HepG2 (cell line): ENCODE measurements at regions of chr1 and their contacts with region 1.

Region 1: DNA sequence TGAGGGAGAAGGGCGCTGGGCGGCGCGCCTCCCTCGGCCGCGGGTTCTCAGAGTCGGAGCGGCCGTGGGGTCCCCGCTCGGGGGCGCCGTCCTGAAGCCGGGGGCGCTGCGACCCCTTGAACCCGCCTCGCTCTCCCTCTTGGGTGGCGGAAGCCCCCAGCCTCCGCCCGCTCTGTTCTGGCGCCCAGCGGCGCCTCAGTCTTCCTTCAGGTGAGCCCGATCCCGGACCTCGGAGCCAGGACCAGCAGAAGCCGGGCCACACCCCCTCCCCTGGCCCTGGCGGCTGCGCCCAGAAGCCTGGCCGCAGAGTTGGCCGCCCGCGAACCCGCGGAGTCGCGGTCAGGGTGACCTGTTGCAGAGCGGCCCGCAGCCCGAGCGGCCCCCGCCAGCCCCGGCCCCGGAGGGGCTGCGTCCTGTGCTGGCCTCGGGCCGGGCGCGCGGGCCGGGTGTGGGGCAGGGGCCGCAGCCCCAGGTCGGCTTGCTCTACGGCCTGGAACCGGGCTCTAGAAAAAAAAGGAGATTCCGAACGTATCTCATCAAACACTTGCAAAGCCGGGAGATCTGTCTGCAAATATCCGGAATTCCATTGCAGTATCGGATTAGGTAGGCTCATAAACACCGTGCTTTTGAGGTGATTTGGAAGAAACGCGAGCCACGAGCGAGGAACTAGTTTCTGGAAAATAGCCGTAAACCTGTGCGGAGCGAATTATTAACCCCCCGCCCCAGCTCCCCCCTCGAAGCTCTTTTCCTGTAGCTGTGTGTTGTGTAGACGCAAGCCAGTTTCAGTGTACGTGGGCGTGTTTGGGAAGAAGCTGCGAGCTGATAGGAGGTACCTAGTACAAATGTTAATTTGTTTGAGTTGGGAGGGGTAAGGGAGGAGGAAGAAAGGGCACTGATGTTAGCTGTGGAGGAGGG is 816 bp downstream of the RALGPS2 start:
- DNase-seq: peak; percentile 94
- ATAC-seq: peak; percentile 87
- H3K4me3 ChIP-seq: peak overlapping the region; percentile 87 to 95 (median 91)
- H3K27ac ChIP-seq: peak overlapping the region; percentile 95
- H3K4me1 ChIP-seq: peaks cover 33% of the 10 kb centered on the region
- H3K27me3 ChIP-seq: no peaks in the 10 kb centered on the region
- CTCF ChIP-seq: peak; percentile 20; the same call in 1 of the 2 replicates
- EP300 ChIP-seq: no peak
- POLR2A ChIP-seq: peak; percentile 64 to 78
- RAD21 ChIP-seq: peak; percentile 36

Region 2: GRCh38 chr1:178224358-178224757 is 501.5 kb before region 1 on chr1:
- CTCF ChIA-PET with region 1: no interaction called
- POLR2A ChIA-PET with region 1: no interaction called
- in situ Hi-C with region 1: no loop called
- intact Hi-C with region 1: no loop called
- DNase-seq: no peak
- ATAC-seq: no peak
- H3K4me3 ChIP-seq: no peak overlapping the region
- H3K27ac ChIP-seq: no peak overlapping the region
- H3K4me1 ChIP-seq: peaks cover 14% of the 10 kb centered on the region; the same call in 1 of the 2 replicates
- H3K27me3 ChIP-seq: no peaks in the 10 kb centered on the region
- CTCF ChIP-seq: no peak
- EP300 ChIP-seq: no peak
- POLR2A ChIP-seq: no peak
- RAD21 ChIP-seq: no peak

Region 3: GRCh38 chr1:178310685-178311105 is 415.2 kb before region 1 on chr1:
- CTCF ChIA-PET with region 1: no interaction called
- POLR2A ChIA-PET with region 1: no interaction called
- in situ Hi-C with region 1: loop called (anchors 25 kb)
- intact Hi-C with region 1: no loop called
- DNase-seq: peak; percentile 77
- ATAC-seq: peak; percentile 83
- H3K4me3 ChIP-seq: no peak overlapping the region
- H3K27ac ChIP-seq: no peak overlapping the region
- H3K4me1 ChIP-seq: no peaks in the 10 kb centered on the region
- H3K27me3 ChIP-seq: no peaks in the 10 kb centered on the region
- CTCF ChIP-seq: peak; percentile 80
- EP300 ChIP-seq: no peak
- POLR2A ChIP-seq: no peak
- RAD21 ChIP-seq: peak; percentile 51; the same call in 1 of the 2 replicates

Region 4: DNA sequence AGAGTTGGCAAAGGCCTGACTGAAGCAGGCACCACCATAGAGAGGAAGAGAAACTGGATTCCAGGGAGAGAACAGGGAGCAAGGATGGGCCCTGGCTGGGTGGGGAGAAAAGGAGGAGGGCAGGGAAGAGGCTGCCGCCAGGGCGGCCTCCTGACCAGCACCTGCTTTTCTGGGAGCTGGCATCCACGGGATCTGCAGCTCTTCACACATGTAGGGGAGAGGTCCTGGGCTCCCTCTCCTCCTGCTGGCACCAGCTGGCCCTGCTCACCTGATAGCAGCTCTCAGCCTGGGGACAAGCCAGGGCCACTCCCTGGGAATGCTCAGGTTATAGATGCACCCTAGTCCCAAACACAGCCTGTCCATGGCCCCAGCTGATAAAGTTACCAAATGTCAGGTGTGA is 173.0 kb before region 1 on chr1:
- CTCF ChIA-PET with region 1: no interaction called
- POLR2A ChIA-PET with region 1: interaction called, 15 read pairs
- in situ Hi-C with region 1: no loop called
- intact Hi-C with region 1: no loop called
- DNase-seq: no peak
- ATAC-seq: peak; percentile 20; the same call in 2 of the 3 replicates
- H3K4me3 ChIP-seq: no peak overlapping the region
- H3K27ac ChIP-seq: peak overlapping the region; percentile 78
- H3K4me1 ChIP-seq: peaks cover 35% of the 10 kb centered on the region
- H3K27me3 ChIP-seq: no peaks in the 10 kb centered on the region; a peak in 1 of 5 replicates
- CTCF ChIP-seq: no peak
- EP300 ChIP-seq: no peak
- POLR2A ChIP-seq: no peak
- RAD21 ChIP-seq: no peak

Region 5: DNA sequence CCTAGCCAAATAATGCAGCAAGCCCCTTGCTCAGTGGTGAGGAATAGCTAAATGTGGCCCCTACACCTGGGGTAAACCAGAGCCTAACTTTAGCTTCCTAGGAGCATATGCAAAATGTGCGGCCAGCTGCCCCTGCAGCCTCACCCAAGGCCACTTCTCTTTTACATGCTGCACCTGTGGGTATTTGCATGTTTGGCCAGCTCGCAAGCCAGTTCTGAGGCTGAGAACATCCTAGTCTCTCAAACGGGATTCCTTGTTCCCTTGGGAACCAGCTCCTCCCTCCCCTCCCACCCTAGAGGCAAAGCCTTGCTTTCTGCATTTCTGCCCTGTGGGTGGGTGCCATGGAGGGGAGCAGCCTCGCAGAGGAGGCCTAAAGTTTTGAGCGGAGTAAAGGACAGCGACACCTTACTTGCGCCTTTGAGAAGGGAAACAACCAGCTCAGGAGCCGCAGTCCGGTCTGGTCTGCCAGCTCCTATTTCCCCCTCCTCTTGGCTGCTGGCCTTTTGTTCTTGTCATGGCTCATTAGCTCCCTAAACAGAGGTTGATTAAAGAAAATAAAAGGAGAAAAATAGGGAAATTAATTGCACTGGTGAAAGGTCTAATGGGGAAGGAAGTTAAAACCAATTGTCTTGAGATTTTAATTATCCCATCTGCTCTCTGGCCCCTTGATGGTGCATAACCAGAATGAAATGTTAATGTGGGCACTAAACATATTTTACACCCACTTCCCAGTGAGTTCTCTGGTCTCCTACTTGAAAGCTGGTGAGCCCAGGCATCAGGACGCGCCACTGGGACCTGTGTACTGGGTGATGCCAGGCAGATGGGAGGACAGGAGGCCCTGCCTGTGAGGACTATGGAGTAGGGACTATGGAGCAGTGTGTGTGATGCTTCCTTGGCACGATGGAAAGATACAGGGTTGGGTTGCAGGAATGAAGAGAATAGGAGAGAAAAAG is 144.2 kb before region 1 on chr1:
- CTCF ChIA-PET with region 1: no interaction called
- POLR2A ChIA-PET with region 1: no interaction called
- in situ Hi-C with region 1: no loop called
- intact Hi-C with region 1: no loop called
- DNase-seq: no peak
- ATAC-seq: no peak
- H3K4me3 ChIP-seq: no peak overlapping the region
- H3K27ac ChIP-seq: no peak overlapping the region
- H3K4me1 ChIP-seq: no peaks in the 10 kb centered on the region
- H3K27me3 ChIP-seq: no peaks in the 10 kb centered on the region
- CTCF ChIP-seq: no peak
- EP300 ChIP-seq: no peak
- POLR2A ChIP-seq: no peak
- RAD21 ChIP-seq: no peak

Region 6: DNA sequence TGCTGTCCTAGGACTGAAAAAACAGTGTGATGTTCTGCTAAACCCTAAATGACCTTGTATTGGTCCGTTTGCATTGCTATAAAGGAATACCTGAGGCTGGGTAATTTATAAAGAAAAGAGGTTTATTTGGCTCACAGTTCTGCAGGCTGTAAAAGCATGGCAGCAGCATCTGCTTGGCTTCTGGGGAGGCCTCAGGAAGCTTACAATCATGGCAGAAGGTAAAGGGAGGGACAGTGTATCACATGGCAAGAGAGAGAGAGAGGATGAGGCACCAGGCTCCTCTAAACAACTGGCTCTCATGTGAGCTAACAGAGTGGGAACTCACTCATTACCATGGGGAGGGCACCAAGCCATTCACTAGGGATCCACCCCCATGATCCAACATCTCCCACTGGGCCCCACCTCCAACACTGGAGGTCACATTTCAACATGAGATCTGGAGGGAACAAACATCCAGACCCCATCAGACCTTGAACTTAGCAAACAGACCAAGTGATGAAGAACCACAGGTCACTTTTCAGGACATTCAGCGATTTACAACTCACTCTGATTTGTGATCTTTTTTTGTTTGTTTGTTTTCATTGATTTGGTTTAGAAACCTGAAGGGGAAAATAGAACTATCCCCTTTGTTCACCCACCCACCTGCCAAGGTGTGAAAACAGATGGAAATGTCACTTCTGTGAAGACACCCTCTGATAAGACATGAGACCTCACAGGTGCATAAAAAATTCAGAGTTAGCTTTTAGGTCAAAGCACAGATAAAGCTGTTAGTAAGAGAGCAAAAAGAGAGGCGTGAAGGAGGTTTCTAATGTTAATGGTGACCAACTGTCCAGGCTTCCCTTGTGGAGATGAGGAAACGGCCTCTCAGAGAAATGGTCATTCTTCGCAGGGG is 105.0 kb before region 1 on chr1:
- CTCF ChIA-PET with region 1: no interaction called
- POLR2A ChIA-PET with region 1: no interaction called
- in situ Hi-C with region 1: no loop called
- intact Hi-C with region 1: loop called (anchors 2 kb)
- DNase-seq: peak; percentile 90
- ATAC-seq: peak; percentile 94
- H3K4me3 ChIP-seq: peak overlapping the region in 2 of 3 experiments; percentile 0 to 31; a peak in 2 of 6 replicates
- H3K27ac ChIP-seq: peak overlapping the region; percentile 64
- H3K4me1 ChIP-seq: peaks cover 33% of the 10 kb centered on the region
- H3K27me3 ChIP-seq: no peaks in the 10 kb centered on the region
- CTCF ChIP-seq: no peak
- EP300 ChIP-seq: peak; percentile 18 to 84; a peak in 3 of 4 replicates
- POLR2A ChIP-seq: no peak
- RAD21 ChIP-seq: no peak

Region 7: GRCh38 chr1:178684542-178685000 is 41.3 kb before region 1 on chr1:
- CTCF ChIA-PET with region 1: no interaction called
- POLR2A ChIA-PET with region 1: interaction called, 3 read pairs
- in situ Hi-C with region 1: no loop called
- intact Hi-C with region 1: loop called (anchors 1 kb)
- DNase-seq: peak; percentile 52
- ATAC-seq: no peak
- H3K4me3 ChIP-seq: no peak overlapping the region
- H3K27ac ChIP-seq: peak overlapping the region; percentile 25
- H3K4me1 ChIP-seq: peaks cover 41% of the 10 kb centered on the region
- H3K27me3 ChIP-seq: no peaks in the 10 kb centered on the region
- CTCF ChIP-seq: no peak
- EP300 ChIP-seq: peak in 1 of 2 experiments; percentile 62; a peak in 1 of 4 replicates
- POLR2A ChIP-seq: no peak
- RAD21 ChIP-seq: no peak

Region 8: GRCh38 chr1:178749581-178750166 is 23.8 kb after region 1 on chr1:
- CTCF ChIA-PET with region 1: no interaction called
- POLR2A ChIA-PET with region 1: interaction called, 7 read pairs
- in situ Hi-C with region 1: no loop called
- intact Hi-C with region 1: loop called (anchors 1 kb)
- DNase-seq: no peak
- ATAC-seq: no peak
- H3K4me3 ChIP-seq: no peak overlapping the region
- H3K27ac ChIP-seq: no peak overlapping the region
- H3K4me1 ChIP-seq: peaks cover 31% of the 10 kb centered on the region
- H3K27me3 ChIP-seq: no peaks in the 10 kb centered on the region
- CTCF ChIP-seq: no peak
- EP300 ChIP-seq: no peak
- POLR2A ChIP-seq: no peak
- RAD21 ChIP-seq: no peak